Mammary epithelial cell (primary cell): ENCODE measurements at regions of chr6 and their contacts with region 1.

Region 1: GRCh38 chr6:88870717-88871330 is 92.6 kb downstream of the RNGTT start:
- DNase-seq: peak; percentile 37
- H3K4me3 ChIP-seq: no peak overlapping the region
- H3K27ac ChIP-seq: no peak overlapping the region
- H3K4me1 ChIP-seq: peaks cover 8% of the 10 kb centered on the region
- H3K27me3 ChIP-seq: no peaks in the 10 kb centered on the region
- CTCF ChIP-seq: peak; percentile 49 to 59

Region 2: GRCh38 chr6:88238065-88238464 is 632.8 kb before region 1 on chr6:
- CTCF ChIA-PET with region 1: no interaction called
- dilution Hi-C with region 1: no loop called
- in situ Hi-C with region 1: no loop called
- intact Hi-C with region 1: loop called (anchors 5 kb)
- DNase-seq: peak; percentile 8
- H3K4me3 ChIP-seq: no peak overlapping the region
- H3K27ac ChIP-seq: no peak overlapping the region
- H3K4me1 ChIP-seq: no peaks in the 10 kb centered on the region
- H3K27me3 ChIP-seq: no peaks in the 10 kb centered on the region
- CTCF ChIP-seq: peak; percentile 36 to 58

Region 3: DNA sequence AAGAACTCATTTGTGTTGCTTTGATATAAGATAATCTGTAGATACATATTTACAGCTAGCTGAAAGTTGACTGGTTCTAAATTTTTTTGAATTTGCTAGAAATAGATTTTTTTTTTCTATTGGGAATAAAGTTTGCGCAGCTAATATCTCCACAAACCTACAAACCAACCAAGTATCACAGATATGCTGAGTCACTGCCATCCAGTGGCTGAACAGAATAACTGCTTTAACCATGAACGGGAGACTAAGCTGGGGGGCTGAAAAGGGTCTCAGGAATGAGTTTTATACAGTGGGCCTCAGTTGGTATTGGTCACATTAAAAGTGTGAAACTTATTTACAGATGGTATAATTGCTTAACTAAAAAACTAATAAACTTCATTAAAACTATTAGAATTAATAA is 378.0 kb before region 1 on chr6:
- CTCF ChIA-PET with region 1: no interaction called
- dilution Hi-C with region 1: no loop called
- in situ Hi-C with region 1: no loop called
- intact Hi-C with region 1: loop called (anchors 2 kb)
- DNase-seq: no peak
- H3K4me3 ChIP-seq: no peak overlapping the region
- H3K27ac ChIP-seq: no peak overlapping the region
- H3K4me1 ChIP-seq: no peaks in the 10 kb centered on the region
- H3K27me3 ChIP-seq: no peaks in the 10 kb centered on the region
- CTCF ChIP-seq: peak; percentile 18 to 61

Region 4: GRCh38 chr6:88641178-88641903 is 229.5 kb before region 1 on chr6:
- CTCF ChIA-PET with region 1: no interaction called
- dilution Hi-C with region 1: no loop called
- in situ Hi-C with region 1: no loop called
- intact Hi-C with region 1: no loop called
- DNase-seq: no peak
- H3K4me3 ChIP-seq: no peak overlapping the region
- H3K27ac ChIP-seq: no peak overlapping the region
- H3K4me1 ChIP-seq: no peaks in the 10 kb centered on the region
- H3K27me3 ChIP-seq: no peaks in the 10 kb centered on the region
- CTCF ChIP-seq: no peak

Region 5: DNA sequence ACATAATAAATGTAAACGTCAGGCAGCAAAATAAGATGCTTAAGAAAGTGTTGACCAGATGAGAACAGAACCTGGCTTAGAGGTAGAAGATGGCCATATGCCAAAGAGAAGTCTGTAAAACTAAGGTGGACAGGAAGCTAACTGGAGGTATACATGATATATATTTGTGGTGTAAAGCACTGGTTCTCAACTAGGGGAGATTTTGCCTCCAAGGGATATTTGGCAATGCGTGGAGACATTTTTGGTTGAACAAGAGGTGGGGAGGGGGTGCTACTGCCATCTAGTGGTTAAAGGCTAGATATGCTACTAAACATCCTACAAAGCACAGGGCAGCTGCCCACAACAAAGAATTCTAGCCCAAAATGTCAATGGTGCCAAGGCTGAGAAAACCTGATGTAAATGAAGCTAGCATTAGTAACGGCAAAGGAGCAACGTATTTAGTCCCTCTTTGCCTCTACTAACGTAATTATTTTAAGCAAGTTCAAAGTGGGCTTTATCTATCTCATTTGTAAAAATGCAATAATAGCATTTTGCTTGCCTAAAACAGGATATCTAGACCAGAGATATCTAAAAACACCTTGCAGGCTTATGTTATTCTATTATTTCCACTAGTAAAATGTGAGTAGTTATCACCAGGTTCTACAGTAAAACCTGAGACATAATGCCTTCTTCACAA is 90.0 kb before region 1 on chr6:
- CTCF ChIA-PET with region 1: no interaction called
- dilution Hi-C with region 1: no loop called
- in situ Hi-C with region 1: no loop called
- intact Hi-C with region 1: loop called (anchors 1 kb)
- DNase-seq: peak; percentile 56
- H3K4me3 ChIP-seq: no peak overlapping the region
- H3K27ac ChIP-seq: no peak overlapping the region
- H3K4me1 ChIP-seq: no peaks in the 10 kb centered on the region
- H3K27me3 ChIP-seq: no peaks in the 10 kb centered on the region
- CTCF ChIP-seq: peak; percentile 63 to 89